GM12878 (cell line): ENCODE measurements at regions of chr18 and their contacts with region 1.

Region 1: DNA sequence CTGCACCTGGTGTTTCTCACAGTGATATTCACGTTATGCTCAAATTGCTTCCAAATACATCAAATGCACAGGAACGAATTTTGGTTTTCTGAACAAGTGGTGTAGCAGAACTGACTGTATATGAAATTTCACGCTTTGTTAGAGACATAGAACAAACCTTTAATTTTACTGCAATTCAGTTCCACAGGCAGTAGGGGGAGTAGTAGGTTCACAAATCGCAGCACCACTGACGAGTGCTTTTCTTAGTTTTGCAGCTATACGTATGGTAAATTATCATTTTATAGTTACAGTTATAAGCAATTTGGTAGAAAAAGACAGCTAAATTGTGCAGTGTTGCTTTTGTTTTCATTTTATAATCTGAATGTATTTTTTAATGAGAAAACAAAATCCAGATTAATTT is 113.3 kb downstream of the KIAA1328 start:
- DNase-seq: no peak
- ATAC-seq: peak; percentile 71
- H3K4me3 ChIP-seq: no peak overlapping the region
- H3K27ac ChIP-seq: no peak overlapping the region
- H3K4me1 ChIP-seq: no peaks in the 10 kb centered on the region
- H3K27me3 ChIP-seq: no peaks in the 10 kb centered on the region
- CTCF ChIP-seq: peak; percentile 54 to 66 (median 54); a peak in 5 of 6 replicates
- EP300 ChIP-seq: no peak
- POLR2A ChIP-seq: no peak
- RAD21 ChIP-seq: peak; percentile 73

Region 2: DNA sequence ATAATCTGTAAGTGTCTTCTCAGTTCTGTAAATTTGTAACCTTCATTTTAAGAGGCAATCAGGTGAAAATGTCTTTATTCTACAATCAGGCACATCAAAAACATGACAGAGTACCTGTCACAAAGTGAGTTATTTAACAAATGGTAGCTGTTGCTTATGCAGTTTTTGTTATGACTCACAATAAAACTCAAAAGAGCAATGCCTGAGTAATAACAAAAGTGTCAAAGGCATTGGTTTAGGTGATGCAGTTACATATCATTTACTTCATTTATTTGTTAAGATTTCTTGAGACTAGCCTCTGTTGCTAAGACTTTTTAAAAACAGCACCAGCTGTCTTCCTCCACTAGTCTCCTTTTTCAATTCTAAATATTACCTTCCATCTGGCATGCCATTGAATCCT is 64.5 kb after region 1 on chr18:
- CTCF ChIA-PET with region 1: no interaction called
- POLR2A ChIA-PET with region 1: no interaction called
- RAD21 ChIA-PET with region 1: no interaction called
- SMC1A ChIA-PET with region 1: no interaction called
- in situ Hi-C with region 1: no loop called
- intact Hi-C with region 1: no loop called
- DNase-seq: no peak
- ATAC-seq: peak; percentile 71
- H3K4me3 ChIP-seq: no peak overlapping the region
- H3K27ac ChIP-seq: no peak overlapping the region
- H3K4me1 ChIP-seq: no peaks in the 10 kb centered on the region; the same call in 1 of the 2 replicates
- H3K27me3 ChIP-seq: no peaks in the 10 kb centered on the region
- CTCF ChIP-seq: no peak
- EP300 ChIP-seq: peak; percentile 47 to 60; a peak in 2 of 4 replicates
- POLR2A ChIP-seq: no peak
- RAD21 ChIP-seq: no peak

Region 3: GRCh38 chr18:37124516-37124915 is 182.3 kb after region 1 on chr18:
- CTCF ChIA-PET with region 1: no interaction called
- POLR2A ChIA-PET with region 1: no interaction called
- RAD21 ChIA-PET with region 1: no interaction called
- SMC1A ChIA-PET with region 1: no interaction called
- in situ Hi-C with region 1: no loop called
- intact Hi-C with region 1: no loop called
- DNase-seq: peak; percentile 9
- ATAC-seq: peak; percentile 74
- H3K4me3 ChIP-seq: no peak overlapping the region
- H3K27ac ChIP-seq: no peak overlapping the region; the same call in 1 of the 2 replicates
- H3K4me1 ChIP-seq: no peaks in the 10 kb centered on the region
- H3K27me3 ChIP-seq: no peaks in the 10 kb centered on the region
- CTCF ChIP-seq: no peak
- EP300 ChIP-seq: no peak
- POLR2A ChIP-seq: no peak
- RAD21 ChIP-seq: no peak

Region 4: DNA sequence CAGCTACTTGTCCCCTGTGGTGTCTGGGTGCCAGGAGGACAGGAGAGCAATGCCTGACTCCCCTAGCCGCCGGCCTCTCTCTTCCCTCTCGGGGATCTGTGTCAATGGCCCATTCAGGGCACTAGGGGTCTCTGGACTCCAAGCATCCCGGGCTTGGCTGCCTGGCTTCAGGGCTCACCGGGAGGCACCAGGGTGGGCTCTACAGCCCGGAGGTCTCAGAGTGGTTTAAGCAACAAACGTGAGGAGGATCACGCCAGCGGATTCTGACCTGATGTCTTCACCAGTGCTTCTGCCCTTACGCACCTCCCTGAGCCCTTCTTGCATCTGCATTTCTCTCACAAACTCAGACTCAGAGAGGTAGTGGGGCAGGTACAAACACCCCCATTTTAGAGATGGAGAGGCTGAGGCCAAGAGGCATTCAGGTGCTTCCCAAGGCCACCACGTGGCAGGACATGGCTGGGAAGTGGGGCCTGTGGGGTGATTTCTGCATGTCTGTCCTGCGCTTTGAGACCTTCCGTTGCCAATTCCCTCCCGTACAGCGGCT is 380.3 kb after region 1 on chr18:
- CTCF ChIA-PET with region 1: interaction called, 4 read pairs
- POLR2A ChIA-PET with region 1: no interaction called
- RAD21 ChIA-PET with region 1: no interaction called
- SMC1A ChIA-PET with region 1: no interaction called
- in situ Hi-C with region 1: loop called (anchors 25 kb)
- intact Hi-C with region 1: loop called (anchors 5 kb)
- DNase-seq: no peak
- ATAC-seq: peak; percentile 94
- H3K4me3 ChIP-seq: no peak overlapping the region
- H3K27ac ChIP-seq: no peak overlapping the region
- H3K4me1 ChIP-seq: no peaks in the 10 kb centered on the region
- H3K27me3 ChIP-seq: peaks cover 2 to 3% of the 10 kb centered on the region in 2 experiments; a peak in 3 of 4 replicates
- CTCF ChIP-seq: peak; percentile 68 to 90 (median 78)
- EP300 ChIP-seq: no peak
- POLR2A ChIP-seq: no peak
- RAD21 ChIP-seq: peak; percentile 46

Region 5: DNA sequence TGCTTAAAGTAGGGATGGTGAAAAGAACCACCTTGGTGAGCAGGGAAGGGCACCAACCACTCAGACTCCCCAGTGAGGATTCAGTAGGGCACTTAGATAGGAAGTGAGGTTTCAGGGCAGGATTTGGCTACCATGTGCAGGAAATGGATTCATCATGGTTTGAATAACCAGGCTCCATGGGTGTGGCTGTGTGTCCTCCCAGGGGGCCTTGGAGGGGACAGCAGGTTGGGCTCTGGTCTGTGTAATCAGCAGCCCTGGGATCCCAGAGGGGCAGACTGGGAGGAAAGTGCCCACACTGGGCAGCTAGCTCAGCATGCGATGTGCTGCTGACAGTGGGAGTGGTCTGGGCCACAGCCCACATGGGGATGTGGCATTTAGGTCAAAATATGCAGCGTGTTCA is 398.8 kb after region 1 on chr18:
- CTCF ChIA-PET with region 1: interaction called, 3 read pairs
- POLR2A ChIA-PET with region 1: no interaction called
- RAD21 ChIA-PET with region 1: no interaction called
- SMC1A ChIA-PET with region 1: no interaction called
- in situ Hi-C with region 1: no loop called
- intact Hi-C with region 1: loop called (anchors 5 kb)
- DNase-seq: no peak
- ATAC-seq: no peak
- H3K4me3 ChIP-seq: no peak overlapping the region
- H3K27ac ChIP-seq: no peak overlapping the region
- H3K4me1 ChIP-seq: no peaks in the 10 kb centered on the region
- H3K27me3 ChIP-seq: peaks cover 2 to 5% of the 10 kb centered on the region in 2 experiments; a peak in 3 of 4 replicates
- CTCF ChIP-seq: no peak
- EP300 ChIP-seq: no peak
- POLR2A ChIP-seq: no peak
- RAD21 ChIP-seq: no peak

Region 6: DNA sequence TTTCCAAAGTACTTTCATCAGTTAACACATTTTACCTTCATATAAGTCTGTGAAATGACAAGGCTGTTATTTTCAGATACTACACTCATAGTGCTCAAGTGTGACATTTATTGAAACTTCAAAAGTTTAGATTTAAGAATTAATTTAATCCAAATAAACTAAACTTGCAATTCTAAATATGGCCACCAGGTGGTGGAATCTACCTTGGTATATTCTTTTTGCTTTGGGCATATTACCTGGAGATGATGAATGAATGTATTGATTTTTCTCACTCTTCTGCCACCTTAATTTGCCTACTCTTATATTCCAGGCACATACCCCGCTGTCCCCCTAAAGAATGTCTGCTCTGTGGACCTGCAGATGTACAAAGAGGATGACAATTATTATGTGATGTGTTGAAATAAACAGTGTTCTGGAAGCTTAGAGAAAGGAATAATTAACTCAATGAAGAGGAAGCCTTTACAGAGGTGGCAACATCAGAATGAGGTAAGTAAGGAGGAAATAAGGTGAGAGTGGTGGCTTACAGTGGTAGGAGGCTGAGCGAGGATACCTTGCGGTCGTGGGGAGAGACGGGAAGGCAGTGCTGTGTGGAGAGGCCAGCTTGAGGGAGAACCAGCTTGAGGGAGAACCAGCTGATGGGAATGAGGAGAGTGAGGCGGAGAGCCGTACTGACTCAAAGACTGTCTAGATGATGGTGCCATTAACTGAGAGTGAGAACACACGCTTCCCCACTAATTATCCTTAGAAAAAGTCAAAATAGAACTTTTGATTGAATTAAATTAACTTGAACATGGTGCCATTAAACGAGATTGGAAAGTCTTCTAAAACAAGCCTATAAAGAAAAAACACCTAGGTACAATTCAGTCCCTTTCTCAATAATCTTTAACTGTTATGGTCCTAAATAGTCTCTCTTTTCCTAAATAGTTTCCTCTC is 443.8 kb after region 1 on chr18:
- CTCF ChIA-PET with region 1: no interaction called
- POLR2A ChIA-PET with region 1: no interaction called
- RAD21 ChIA-PET with region 1: no interaction called
- SMC1A ChIA-PET with region 1: no interaction called
- in situ Hi-C with region 1: no loop called
- intact Hi-C with region 1: loop called (anchors 5 kb)
- DNase-seq: no peak
- ATAC-seq: peak; percentile 27; the same call in 1 of the 3 replicates
- H3K4me3 ChIP-seq: no peak overlapping the region
- H3K27ac ChIP-seq: no peak overlapping the region
- H3K4me1 ChIP-seq: no peaks in the 10 kb centered on the region
- H3K27me3 ChIP-seq: no peaks in the 10 kb centered on the region; a peak in 3 of 4 replicates
- CTCF ChIP-seq: peak; percentile 49 to 64 (median 53)
- EP300 ChIP-seq: no peak
- POLR2A ChIP-seq: no peak
- RAD21 ChIP-seq: peak; percentile 75

Region 7: DNA sequence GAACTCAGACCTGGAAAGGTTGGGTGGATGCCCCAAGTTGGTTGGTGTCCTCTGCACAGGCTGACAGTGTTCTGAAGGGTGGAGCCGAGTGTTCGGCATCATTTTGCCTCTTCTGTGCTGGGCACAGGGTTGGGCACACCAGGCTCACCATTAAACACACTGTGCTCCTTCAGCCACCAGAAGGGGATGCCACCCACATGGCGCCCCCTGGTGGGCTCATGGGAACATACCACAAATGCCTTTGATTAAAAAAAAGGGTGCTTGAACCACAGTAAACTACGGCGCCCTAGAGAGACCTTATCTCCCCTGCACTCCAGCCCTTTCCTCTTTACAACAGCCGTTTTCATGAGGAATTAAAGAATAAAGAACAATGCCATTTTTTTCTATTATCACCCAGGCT is 533.9 kb after region 1 on chr18:
- CTCF ChIA-PET with region 1: no interaction called
- POLR2A ChIA-PET with region 1: no interaction called
- RAD21 ChIA-PET with region 1: no interaction called
- SMC1A ChIA-PET with region 1: no interaction called
- in situ Hi-C with region 1: no loop called
- intact Hi-C with region 1: loop called (anchors 5 kb)
- DNase-seq: no peak
- ATAC-seq: peak; percentile 75
- H3K4me3 ChIP-seq: no peak overlapping the region
- H3K27ac ChIP-seq: no peak overlapping the region
- H3K4me1 ChIP-seq: no peaks in the 10 kb centered on the region
- H3K27me3 ChIP-seq: peaks cover 2 to 3% of the 10 kb centered on the region in 2 experiments; a peak in 3 of 4 replicates
- CTCF ChIP-seq: peak; percentile 44 to 59 (median 57)
- EP300 ChIP-seq: no peak
- POLR2A ChIP-seq: no peak
- RAD21 ChIP-seq: peak; percentile 42

Region 8: DNA sequence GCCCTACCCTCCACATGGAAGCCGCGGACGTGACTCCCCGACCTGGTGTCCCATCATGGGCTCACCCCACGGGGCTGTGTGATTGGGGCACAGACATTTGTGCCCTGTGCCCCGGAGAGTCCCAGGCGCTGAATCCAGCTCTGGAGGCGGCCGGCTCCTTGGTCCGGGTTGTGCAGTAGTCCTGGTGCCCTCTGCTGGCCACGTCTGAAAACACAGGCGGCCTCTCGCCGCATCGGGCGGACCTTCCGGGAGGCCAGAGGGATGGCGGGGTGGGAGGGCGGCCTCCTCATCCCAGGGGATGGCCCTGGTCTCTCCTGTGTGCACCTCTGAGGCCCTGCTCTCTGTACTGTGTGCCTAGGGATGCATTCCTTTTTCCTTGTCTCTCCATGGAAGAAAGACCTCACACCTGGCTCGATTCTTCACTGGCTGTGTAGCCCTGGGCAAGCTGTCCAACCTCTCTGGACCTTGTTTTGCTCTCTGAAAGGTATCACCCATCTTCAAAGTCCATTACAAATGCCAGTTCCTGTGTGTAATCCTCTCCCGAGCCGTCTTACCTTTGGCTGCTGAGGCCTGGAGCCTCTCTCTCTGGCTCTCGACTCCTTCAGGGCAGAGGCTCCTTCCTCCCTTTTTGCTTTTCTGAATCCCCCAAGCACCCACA is 595.7 kb after region 1 on chr18:
- CTCF ChIA-PET with region 1: interaction called, 3 read pairs
- POLR2A ChIA-PET with region 1: no interaction called
- RAD21 ChIA-PET with region 1: no interaction called
- SMC1A ChIA-PET with region 1: no interaction called
- in situ Hi-C with region 1: loop called (anchors 25 kb)
- intact Hi-C with region 1: no loop called
- DNase-seq: no peak
- ATAC-seq: peak; percentile 95
- H3K4me3 ChIP-seq: no peak overlapping the region
- H3K27ac ChIP-seq: no peak overlapping the region
- H3K4me1 ChIP-seq: no peaks in the 10 kb centered on the region; the same call in 1 of the 2 replicates
- H3K27me3 ChIP-seq: peaks cover 4 to 6% of the 10 kb centered on the region in 2 experiments
- CTCF ChIP-seq: peak; percentile 77 to 87 (median 84)
- EP300 ChIP-seq: no peak
- POLR2A ChIP-seq: no peak
- RAD21 ChIP-seq: peak; percentile 66